A549 (cell line): ENCODE measurements at regions of chr2 and their contacts with region 1.

Region 1: GRCh38 chr2:20015472-20016083 is 3.1 kb upstream of the MATN3 start:
- DNase-seq: peak; percentile 40 to 70
- ATAC-seq: peak in 1 of 2 experiments; percentile 42; a peak in 3 of 6 replicates
- H3K4me3 ChIP-seq: no peak overlapping the region
- H3K27ac ChIP-seq: no peak overlapping the region
- H3K4me1 ChIP-seq: peaks cover 10% of the 10 kb centered on the region; the same call in 1 of the 3 replicates
- CTCF ChIP-seq: peak; percentile 84
- EP300 ChIP-seq: no peak
- POLR2A ChIP-seq: no peak
- RAD21 ChIP-seq: peak; percentile 75 to 76

Region 2: DNA sequence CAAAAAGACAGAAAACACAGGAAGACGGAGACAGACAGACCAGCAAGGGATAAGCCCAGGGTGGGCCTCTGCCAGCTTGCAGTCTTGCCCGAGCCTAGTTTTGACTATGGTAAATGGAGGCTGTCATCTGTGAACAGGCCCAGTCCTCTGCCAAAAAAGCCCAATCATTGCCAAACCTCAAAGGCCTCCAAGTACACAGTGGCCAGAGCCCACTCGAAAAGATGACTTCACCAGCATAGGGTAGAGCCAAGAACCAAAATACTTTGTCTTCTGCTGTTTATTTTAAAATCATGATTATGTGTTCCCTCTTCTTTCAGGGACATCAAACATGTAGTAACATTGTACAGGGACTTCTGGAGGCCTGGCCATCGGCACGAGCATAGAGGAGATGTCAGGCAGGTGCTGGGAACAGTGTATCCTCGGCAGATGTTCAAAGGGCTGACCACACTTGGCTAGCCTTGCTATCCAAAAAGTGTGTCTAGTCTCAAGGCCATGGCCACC is 179.7 kb before region 1 on chr2:
- CTCF ChIA-PET with region 1: no interaction called
- POLR2A ChIA-PET with region 1: no interaction called
- DNase-seq: no peak
- ATAC-seq: peak in 1 of 2 experiments; percentile 25; a peak in 1 of 6 replicates
- H3K4me3 ChIP-seq: no peak overlapping the region
- H3K27ac ChIP-seq: no peak overlapping the region
- H3K4me1 ChIP-seq: peaks cover 5% of the 10 kb centered on the region; the same call in 2 of the 3 replicates
- CTCF ChIP-seq: no peak
- EP300 ChIP-seq: no peak
- POLR2A ChIP-seq: no peak
- RAD21 ChIP-seq: no peak

Region 3: GRCh38 chr2:19955544-19956422 is 59.8 kb before region 1 on chr2:
- CTCF ChIA-PET with region 1: interaction called, 17 read pairs
- POLR2A ChIA-PET with region 1: no interaction called
- DNase-seq: peak; percentile 78 to 90
- ATAC-seq: peak; percentile 100
- H3K4me3 ChIP-seq: no peak overlapping the region
- H3K27ac ChIP-seq: no peak overlapping the region
- H3K4me1 ChIP-seq: no peaks in the 10 kb centered on the region; the same call in 2 of the 3 replicates
- CTCF ChIP-seq: peak; percentile 100
- EP300 ChIP-seq: no peak
- POLR2A ChIP-seq: no peak
- RAD21 ChIP-seq: peak; percentile 98

Region 4: DNA sequence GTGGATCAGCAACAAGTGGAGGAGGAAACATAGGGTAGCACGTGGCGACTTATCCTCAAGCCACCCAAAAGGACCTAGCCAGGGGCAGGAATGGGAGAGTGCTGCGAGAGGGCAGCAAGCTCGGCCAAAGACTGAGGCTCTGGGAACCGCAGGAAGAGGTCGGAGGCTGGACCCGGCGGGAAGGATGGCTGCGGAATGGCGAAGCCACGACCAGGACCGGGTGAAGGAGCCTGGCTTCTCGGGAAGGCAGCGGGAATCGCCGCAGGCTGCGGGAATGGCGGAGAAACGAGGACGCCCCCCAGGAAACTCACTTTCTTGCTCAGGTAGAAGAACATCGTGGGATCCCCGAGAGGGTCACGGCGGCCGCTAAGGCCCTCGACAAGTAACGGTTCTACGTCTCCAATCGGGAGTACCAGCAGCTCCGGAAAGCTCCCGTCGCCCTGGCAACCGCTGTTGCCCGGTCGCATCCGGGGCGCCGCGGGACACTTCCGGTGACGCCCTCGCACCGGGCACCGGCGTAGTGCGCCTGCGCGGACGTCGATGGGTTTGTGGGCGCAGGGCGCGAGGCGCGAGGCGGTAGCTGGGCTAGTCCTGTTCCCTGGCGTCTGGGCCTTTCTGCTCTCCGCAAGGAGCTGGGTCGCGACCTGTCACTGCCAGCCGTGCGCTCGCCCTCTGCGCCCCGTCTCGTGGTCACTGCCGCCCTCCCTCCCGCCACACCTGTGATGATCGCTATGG is 25.7 kb before region 1 on chr2 and contains the start of gene WDR35:
- CTCF ChIA-PET with region 1: interaction called, 10 read pairs
- POLR2A ChIA-PET with region 1: interaction called, 5 read pairs
- DNase-seq: peak; percentile 94 to 98
- ATAC-seq: peak; percentile 98
- H3K4me3 ChIP-seq: peak within 1 kb of the TSS; percentile 68
- H3K27ac ChIP-seq: peak within 1 kb of the TSS; percentile 73 to 89
- H3K4me1 ChIP-seq: peaks cover 17% of the 10 kb centered on the region
- CTCF ChIP-seq: no peak
- EP300 ChIP-seq: no peak
- POLR2A ChIP-seq: peak; percentile 99
- RAD21 ChIP-seq: no peak
- polyA plus RNA-seq, gene WDR35: 24.6 and 28.5 TPM in 2 replicates

Region 5: GRCh38 chr2:20027705-20028434 is 12.3 kb after region 1 on chr2:
- CTCF ChIA-PET with region 1: interaction called, 40 read pairs
- POLR2A ChIA-PET with region 1: no interaction called
- DNase-seq: no peak
- ATAC-seq: no peak
- H3K4me3 ChIP-seq: no peak overlapping the region
- H3K27ac ChIP-seq: peak overlapping the region; percentile 8 to 40; a peak in 4 of 6 replicates
- H3K4me1 ChIP-seq: peaks cover 13% of the 10 kb centered on the region
- CTCF ChIP-seq: no peak
- EP300 ChIP-seq: no peak
- POLR2A ChIP-seq: no peak
- RAD21 ChIP-seq: no peak

Region 6: DNA sequence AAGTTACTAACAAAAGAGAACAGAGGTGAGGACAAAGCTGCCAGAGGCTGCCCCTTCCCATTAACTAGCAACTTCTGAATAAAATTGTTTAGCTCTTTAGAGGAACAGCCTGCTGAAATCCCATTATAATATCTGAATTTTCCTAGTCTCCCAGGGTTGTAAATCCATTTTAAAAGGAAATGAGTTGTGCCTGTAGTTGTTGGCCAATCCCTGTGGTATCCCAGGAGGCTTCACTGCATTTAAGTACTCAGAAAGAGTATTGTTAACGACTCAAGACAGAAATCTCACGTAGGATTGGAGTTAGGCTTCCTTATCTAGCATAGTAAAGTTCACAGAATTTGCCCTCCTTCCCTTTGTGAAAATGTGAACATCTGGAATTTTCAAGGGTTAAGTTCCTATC is 27.0 kb after region 1 on chr2:
- CTCF ChIA-PET with region 1: interaction called, 28 read pairs
- POLR2A ChIA-PET with region 1: interaction called, 5 read pairs
- DNase-seq: no peak
- ATAC-seq: 0 out of 6 replicates have a peak, but pooled peaks of 1 of the 2 experiments have one; percentile 27
- H3K4me3 ChIP-seq: no peak overlapping the region
- H3K27ac ChIP-seq: no peak overlapping the region
- H3K4me1 ChIP-seq: peaks cover 18% of the 10 kb centered on the region; the same call in 2 of the 3 replicates
- CTCF ChIP-seq: no peak
- EP300 ChIP-seq: no peak
- POLR2A ChIP-seq: no peak
- RAD21 ChIP-seq: no peak

Region 7: DNA sequence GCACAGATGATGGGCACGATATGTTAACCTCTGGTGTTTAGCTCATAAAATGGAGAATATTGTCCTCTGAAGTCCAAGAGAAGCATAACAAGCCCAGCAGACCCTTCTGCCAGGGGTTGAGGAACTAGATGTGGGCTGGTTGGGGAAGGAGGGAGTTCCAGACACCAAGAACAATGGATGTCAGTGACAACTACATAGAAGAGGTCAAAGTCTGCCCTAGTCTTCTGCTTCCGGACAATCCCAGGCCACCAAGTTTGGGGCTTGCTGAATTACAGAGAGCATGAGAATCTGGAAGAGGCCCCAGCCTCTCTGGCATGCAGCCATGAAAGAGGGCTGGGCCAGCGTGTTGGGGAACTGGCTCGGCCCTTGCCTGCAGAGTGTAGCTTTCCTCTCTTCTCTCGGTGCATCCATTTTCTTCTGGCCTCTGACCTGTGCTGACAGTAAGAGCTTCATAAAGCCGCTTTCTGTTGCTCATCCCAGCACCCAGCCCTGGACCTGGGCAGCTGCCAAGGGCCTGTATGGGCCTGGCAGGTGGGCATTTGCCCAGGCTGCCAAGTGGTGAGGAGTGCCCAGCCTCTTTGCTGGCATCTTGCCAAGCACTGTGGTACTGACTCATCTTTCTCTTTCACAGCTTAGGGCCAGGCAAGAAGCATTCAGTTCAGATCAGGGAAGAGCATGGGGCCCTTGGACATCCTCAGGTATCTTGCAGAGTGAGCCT is 50.5 kb after region 1 on chr2:
- CTCF ChIA-PET with region 1: interaction called, 16 read pairs
- POLR2A ChIA-PET with region 1: no interaction called
- DNase-seq: peak; percentile 77 to 86
- ATAC-seq: peak; percentile 86 to 88
- H3K4me3 ChIP-seq: no peak overlapping the region
- H3K27ac ChIP-seq: peak overlapping the region; percentile 55 to 81
- H3K4me1 ChIP-seq: peaks cover 36% of the 10 kb centered on the region
- CTCF ChIP-seq: no peak
- EP300 ChIP-seq: no peak; a peak in 1 of 5 replicates
- POLR2A ChIP-seq: no peak
- RAD21 ChIP-seq: peak in 1 of 2 experiments; percentile 20; a peak in 1 of 5 replicates

Region 8: DNA sequence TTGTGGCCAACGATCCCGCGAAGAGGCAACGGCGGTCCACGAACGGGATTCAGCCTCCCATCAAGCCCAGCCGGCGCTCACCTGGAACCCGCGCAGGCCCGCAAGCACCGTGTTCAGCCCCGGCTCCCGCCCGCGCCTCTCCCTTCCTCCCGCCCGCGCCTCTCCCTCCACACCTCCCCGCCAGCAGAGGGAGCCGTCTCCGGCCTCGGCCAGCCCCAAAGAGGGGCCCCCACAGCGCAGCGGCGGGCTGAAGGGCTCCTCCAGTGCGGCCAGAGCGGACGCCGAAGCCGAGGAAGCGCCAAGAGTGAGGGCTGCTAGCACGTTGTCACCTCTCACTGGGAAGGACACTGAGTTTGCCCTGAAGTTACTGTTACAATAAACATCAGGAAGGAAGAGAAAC is 91.2 kb after region 1 on chr2:
- CTCF ChIA-PET with region 1: interaction called, 15 read pairs
- POLR2A ChIA-PET with region 1: no interaction called
- DNase-seq: no peak
- ATAC-seq: no peak
- H3K4me3 ChIP-seq: no peak overlapping the region
- H3K27ac ChIP-seq: no peak overlapping the region
- H3K4me1 ChIP-seq: peaks cover 32% of the 10 kb centered on the region
- CTCF ChIP-seq: peak; percentile 12; the same call in 1 of the 3 replicates
- EP300 ChIP-seq: no peak
- POLR2A ChIP-seq: no peak
- RAD21 ChIP-seq: no peak